Activated CD4-positive, alpha-beta memory T cell treated with anti-CD3 and anti-CD28 coated beads, Interleukin-2, amount 10 ng/mL, durations not matched to agents 7 days and 5 days (primary cell): ENCODE measurements at regions of chr16 and their contacts with region 1.

Region 1: DNA sequence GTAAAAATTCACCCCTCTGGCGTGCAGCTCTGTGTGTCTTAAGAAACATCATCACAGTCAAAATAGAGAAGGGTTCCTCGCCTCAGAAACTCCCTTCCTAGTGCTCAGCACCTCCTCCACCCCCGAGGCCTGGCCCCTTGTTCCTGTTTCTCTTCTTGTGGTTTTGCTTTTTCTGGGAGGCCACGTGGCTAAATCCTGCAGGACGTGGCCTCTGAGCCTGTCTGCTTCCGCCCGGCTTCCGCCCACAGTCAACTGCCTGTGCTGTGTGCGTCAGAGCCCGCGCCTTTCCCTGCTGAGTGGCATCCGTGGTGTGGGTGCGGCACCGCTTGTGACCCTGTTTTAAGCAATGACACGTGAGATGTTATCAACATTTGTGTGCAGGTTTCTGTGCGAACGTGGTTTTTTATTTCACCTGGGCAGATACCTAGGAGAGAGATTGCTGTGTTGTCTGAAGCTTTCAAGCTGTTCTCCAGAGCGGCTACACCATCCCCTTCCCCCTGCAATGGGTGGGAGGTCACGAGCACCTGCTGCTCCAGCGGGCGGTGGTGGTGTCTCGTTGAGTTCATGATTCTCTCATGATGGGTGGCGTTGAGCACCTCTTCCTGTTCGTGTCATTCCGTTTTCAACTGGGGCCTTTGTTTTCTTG is 21.7 kb downstream of the ACSF3 start:
- DNase-seq: peak; percentile 92
- H3K4me3 Mint-ChIP-seq: peak overlapping the region; percentile 71
- H3K27ac Mint-ChIP-seq: peak overlapping the region; percentile 95
- H3K4me1 Mint-ChIP-seq: peaks cover 36% of the 10 kb centered on the region
- H3K27me3 Mint-ChIP-seq: no peaks in the 10 kb centered on the region

Region 2: GRCh38 chr16:88856828-88857733 is 258.3 kb before region 1 on chr16 and contains the starts of genes GALNS and TRAPPC2L:
- CTCF ChIA-PET with region 1: no interaction called
- POLR2A ChIA-PET with region 1: interaction called, 11 read pairs
- DNase-seq: peak; percentile 99
- H3K4me3 Mint-ChIP-seq: peak within 1 kb of the TSS; percentile 97
- H3K27ac Mint-ChIP-seq: peak within 1 kb of the TSS; percentile 82
- H3K4me1 Mint-ChIP-seq: peaks cover 33% of the 10 kb centered on the region
- H3K27me3 Mint-ChIP-seq: no peaks in the 10 kb centered on the region
- total RNA-seq, gene GALNS: 35.2 to 38.2 TPM
- total RNA-seq, gene TRAPPC2L: 44.9 to 45.8 TPM

Region 3: DNA sequence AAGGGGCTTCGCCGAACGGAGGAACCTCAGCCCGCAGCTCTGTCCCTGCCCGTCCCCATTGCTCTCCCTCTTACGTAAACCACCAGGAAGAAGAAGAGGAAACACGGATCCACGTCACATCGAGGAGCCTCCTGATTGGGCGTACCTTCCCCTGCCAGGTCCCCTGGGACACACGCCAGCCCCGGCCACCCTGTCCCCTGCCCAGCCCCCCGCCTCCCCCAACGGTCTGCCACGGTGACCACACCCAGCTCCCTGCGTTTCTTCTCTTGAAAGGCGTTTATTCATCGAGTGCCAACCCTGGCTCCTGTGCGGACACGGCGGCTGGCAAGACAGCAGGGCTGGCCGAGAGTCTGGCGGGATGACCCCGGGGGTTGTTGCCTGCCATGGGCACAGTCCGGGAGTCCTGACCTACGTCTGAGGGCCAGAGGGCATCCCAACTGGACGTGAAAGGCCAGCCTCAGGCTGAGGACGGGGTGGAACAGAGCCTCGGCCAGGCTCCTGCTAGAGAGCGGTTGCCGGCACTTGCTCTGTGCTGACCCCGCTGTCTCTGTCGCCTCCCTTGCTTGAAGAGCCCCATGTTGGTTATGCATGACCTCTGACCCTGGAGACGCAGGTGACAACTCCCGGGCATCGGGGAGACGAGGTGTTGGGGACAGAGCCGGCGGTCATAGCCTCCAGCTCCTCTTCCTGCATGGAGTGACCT is 62.3 kb before region 1 on chr16:
- CTCF ChIA-PET with region 1: no interaction called
- POLR2A ChIA-PET with region 1: no interaction called
- DNase-seq: no peak
- H3K4me3 Mint-ChIP-seq: peak overlapping the region; percentile 45
- H3K27ac Mint-ChIP-seq: no peak overlapping the region
- H3K4me1 Mint-ChIP-seq: no peaks in the 10 kb centered on the region
- H3K27me3 Mint-ChIP-seq: no peaks in the 10 kb centered on the region

Region 4: DNA sequence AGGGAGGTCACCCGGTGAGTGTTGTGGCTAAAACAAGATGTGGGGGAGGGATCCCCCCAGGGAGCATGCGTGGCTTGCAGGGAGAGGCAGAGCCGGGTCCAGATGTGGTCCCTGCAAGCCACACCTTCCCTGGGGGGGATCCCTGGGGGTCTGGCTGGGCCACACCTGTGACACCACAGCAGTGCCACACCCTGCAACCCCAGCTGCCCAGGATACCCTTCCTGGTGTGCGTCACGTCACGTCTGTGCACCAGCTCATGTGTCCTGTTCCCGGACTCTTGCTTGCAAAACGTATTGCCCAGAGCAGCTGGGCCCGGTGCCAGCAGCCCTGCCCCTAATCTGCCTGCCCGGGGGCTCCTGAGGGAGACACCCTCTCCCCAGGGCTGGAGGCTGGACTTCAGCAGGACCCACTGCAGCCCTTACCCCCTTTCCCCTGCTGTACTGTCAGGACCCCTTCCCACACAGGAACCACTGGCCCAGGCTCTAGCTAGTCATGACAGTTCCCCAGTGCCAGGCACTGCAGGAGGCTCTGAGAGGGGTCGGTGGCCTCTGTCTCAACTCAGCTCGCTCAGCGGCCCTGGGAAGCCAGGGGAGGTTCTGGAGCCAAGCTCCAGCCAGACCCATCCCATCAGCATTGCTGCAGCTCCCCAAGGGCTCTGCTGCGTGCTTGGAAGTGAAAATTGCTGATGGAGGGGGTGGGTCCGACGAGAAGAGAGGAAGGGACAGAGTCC is 47.5 kb before region 1 on chr16:
- CTCF ChIA-PET with region 1: no interaction called
- POLR2A ChIA-PET with region 1: no interaction called
- DNase-seq: no peak
- H3K4me3 Mint-ChIP-seq: no peak overlapping the region
- H3K27ac Mint-ChIP-seq: no peak overlapping the region
- H3K4me1 Mint-ChIP-seq: no peaks in the 10 kb centered on the region
- H3K27me3 Mint-ChIP-seq: no peaks in the 10 kb centered on the region

Region 5: DNA sequence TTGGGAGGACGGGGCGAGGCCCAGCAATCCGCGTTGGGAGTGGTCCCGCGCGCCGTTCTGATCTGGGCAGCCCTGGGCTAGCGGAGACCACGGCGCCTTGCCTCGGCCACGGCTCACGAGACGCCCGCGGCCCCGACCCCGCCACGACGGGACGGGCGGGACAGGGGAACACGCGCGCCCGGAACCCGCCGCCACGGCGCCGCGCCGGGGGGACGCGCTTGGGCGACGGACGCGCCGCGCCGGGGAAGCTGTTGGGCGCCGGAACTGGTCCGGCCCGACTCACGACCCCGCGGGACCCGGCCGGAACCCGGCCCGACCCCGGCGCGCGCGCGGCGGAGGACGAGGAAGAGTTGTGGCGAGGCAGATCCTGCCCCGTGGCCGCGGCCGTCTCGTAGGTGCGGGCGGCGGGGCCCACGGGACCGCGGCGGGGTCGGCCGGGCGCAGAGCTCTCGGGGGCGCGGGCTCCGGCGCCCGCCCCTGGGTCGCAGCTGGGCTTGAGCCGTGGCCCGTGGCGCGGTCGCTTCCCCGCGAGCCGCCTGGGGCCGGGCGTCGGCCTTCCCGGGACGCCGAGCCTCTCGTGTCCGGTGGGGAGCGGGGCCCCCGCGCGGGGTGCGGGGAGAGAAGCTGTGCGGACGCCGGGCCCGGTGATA is 21.6 kb before region 1 on chr16 and contains the start of gene ACSF3:
- CTCF ChIA-PET with region 1: interaction called, 3 read pairs
- POLR2A ChIA-PET with region 1: interaction called, 26 read pairs
- DNase-seq: peak; percentile 73
- H3K4me3 Mint-ChIP-seq: peak within 1 kb of the TSS; percentile 92
- H3K27ac Mint-ChIP-seq: peak within 1 kb of the TSS; percentile 86
- H3K4me1 Mint-ChIP-seq: peaks cover 46% of the 10 kb centered on the region
- H3K27me3 Mint-ChIP-seq: peaks cover 15% of the 10 kb centered on the region
- total RNA-seq, gene ACSF3: 44.4 to 45.3 TPM

Region 6: GRCh38 chr16:89099905-89100304 is 15.4 kb before region 1 on chr16:
- CTCF ChIA-PET with region 1: interaction called, 3 read pairs
- POLR2A ChIA-PET with region 1: interaction called, 17 read pairs
- DNase-seq: peak; percentile 28
- H3K4me3 Mint-ChIP-seq: no peak overlapping the region
- H3K27ac Mint-ChIP-seq: peak overlapping the region; percentile 49
- H3K4me1 Mint-ChIP-seq: peaks cover 71% of the 10 kb centered on the region
- H3K27me3 Mint-ChIP-seq: no peaks in the 10 kb centered on the region

Region 7: GRCh38 chr16:89210904-89211515 is 95.7 kb after region 1 on chr16:
- CTCF ChIA-PET with region 1: no interaction called
- POLR2A ChIA-PET with region 1: no interaction called
- DNase-seq: no peak
- H3K4me3 Mint-ChIP-seq: no peak overlapping the region
- H3K27ac Mint-ChIP-seq: no peak overlapping the region
- H3K4me1 Mint-ChIP-seq: no peaks in the 10 kb centered on the region
- H3K27me3 Mint-ChIP-seq: peaks cover 11% of the 10 kb centered on the region